GM12878 (cell line): ENCODE measurements at regions of chr1 and their contacts with region 1.

Region 1: GRCh38 chr1:89483010-89483756 is 41.4 kb upstream of the LRRC8B start:
- DNase-seq: peak; percentile 46
- ATAC-seq: peak; percentile 97
- H3K4me3 ChIP-seq: no peak overlapping the region
- H3K27ac ChIP-seq: no peak overlapping the region
- H3K4me1 ChIP-seq: no peaks in the 10 kb centered on the region
- H3K27me3 ChIP-seq: no peaks in the 10 kb centered on the region
- CTCF ChIP-seq: peak; percentile 72 to 82 (median 78)
- EP300 ChIP-seq: no peak
- POLR2A ChIP-seq: no peak
- RAD21 ChIP-seq: peak; percentile 77

Region 2: GRCh38 chr1:89472952-89473351 is 10.2 kb before region 1 on chr1:
- CTCF ChIA-PET with region 1: interaction called, 20 read pairs
- POLR2A ChIA-PET with region 1: no interaction called
- RAD21 ChIA-PET with region 1: interaction called, 3 read pairs
- SMC1A ChIA-PET with region 1: no interaction called
- in situ Hi-C with region 1: no loop called
- intact Hi-C with region 1: no loop called
- DNase-seq: no peak
- ATAC-seq: no peak
- H3K4me3 ChIP-seq: no peak overlapping the region
- H3K27ac ChIP-seq: no peak overlapping the region
- H3K4me1 ChIP-seq: no peaks in the 10 kb centered on the region
- H3K27me3 ChIP-seq: no peaks in the 10 kb centered on the region
- CTCF ChIP-seq: no peak
- EP300 ChIP-seq: no peak
- POLR2A ChIP-seq: no peak
- RAD21 ChIP-seq: no peak

Region 3: DNA sequence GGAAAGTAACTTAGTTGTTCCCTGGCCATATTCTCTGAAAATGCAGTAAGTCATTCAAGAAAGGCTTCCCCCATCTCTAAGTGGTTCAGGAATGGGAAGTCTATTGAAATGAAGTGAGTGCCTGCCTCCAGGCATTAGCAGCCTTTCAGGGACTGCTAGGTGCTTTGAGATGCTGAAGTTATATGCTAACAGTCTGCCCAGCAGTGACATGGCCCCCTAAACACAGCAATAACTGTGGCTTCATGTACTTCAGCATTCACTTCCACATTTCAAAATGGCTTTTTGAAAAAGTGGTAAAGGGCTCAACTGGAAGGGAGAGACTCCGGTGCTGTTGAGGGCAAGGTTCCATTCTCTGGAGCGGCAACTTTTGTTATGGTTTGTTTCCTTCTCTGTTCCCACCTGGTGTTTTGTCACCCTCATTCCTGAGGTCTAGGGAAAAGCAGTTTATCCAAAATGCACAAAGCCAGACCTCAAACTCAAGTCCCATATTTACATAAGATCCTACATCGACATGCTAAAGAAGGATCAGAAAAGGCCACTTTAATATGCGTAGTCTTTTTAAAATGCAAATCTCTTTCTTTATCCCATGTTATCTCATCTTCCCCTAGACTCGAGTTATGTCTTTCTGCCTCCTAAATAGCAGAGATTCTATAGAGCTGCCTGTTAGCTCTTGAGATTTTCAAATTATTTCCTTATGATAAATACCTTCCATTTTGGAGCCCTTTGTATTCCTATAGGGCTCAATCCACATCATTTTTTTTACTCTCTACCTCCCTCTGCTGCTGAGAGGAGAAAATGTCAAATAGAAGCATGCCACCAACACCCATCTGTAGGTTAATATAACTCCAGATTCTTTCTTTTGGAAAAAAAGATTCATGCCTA is 115.5 kb after region 1 on chr1:
- CTCF ChIA-PET with region 1: interaction called, 77 read pairs
- POLR2A ChIA-PET with region 1: no interaction called
- RAD21 ChIA-PET with region 1: interaction called, 16 read pairs
- SMC1A ChIA-PET with region 1: interaction called, 22 read pairs
- in situ Hi-C with region 1: no loop called
- intact Hi-C with region 1: loop called (anchors 1 kb)
- DNase-seq: no peak
- ATAC-seq: peak; percentile 88
- H3K4me3 ChIP-seq: no peak overlapping the region
- H3K27ac ChIP-seq: no peak overlapping the region
- H3K4me1 ChIP-seq: peaks cover 9% of the 10 kb centered on the region
- H3K27me3 ChIP-seq: no peaks in the 10 kb centered on the region
- CTCF ChIP-seq: peak; percentile 53 to 62 (median 56)
- EP300 ChIP-seq: no peak
- POLR2A ChIP-seq: no peak
- RAD21 ChIP-seq: peak; percentile 67

Region 4: GRCh38 chr1:89605692-89606091 is 122.5 kb after region 1 on chr1:
- CTCF ChIA-PET with region 1: interaction called, 77 read pairs
- POLR2A ChIA-PET with region 1: no interaction called
- RAD21 ChIA-PET with region 1: interaction called, 16 read pairs
- SMC1A ChIA-PET with region 1: interaction called, 22 read pairs
- in situ Hi-C with region 1: no loop called
- intact Hi-C with region 1: no loop called
- DNase-seq: no peak
- ATAC-seq: no peak
- H3K4me3 ChIP-seq: no peak overlapping the region
- H3K27ac ChIP-seq: no peak overlapping the region
- H3K4me1 ChIP-seq: peaks cover 14% of the 10 kb centered on the region
- H3K27me3 ChIP-seq: no peaks in the 10 kb centered on the region; a peak in 1 of 4 replicates
- CTCF ChIP-seq: no peak
- EP300 ChIP-seq: no peak
- POLR2A ChIP-seq: no peak
- RAD21 ChIP-seq: no peak

Region 5: DNA sequence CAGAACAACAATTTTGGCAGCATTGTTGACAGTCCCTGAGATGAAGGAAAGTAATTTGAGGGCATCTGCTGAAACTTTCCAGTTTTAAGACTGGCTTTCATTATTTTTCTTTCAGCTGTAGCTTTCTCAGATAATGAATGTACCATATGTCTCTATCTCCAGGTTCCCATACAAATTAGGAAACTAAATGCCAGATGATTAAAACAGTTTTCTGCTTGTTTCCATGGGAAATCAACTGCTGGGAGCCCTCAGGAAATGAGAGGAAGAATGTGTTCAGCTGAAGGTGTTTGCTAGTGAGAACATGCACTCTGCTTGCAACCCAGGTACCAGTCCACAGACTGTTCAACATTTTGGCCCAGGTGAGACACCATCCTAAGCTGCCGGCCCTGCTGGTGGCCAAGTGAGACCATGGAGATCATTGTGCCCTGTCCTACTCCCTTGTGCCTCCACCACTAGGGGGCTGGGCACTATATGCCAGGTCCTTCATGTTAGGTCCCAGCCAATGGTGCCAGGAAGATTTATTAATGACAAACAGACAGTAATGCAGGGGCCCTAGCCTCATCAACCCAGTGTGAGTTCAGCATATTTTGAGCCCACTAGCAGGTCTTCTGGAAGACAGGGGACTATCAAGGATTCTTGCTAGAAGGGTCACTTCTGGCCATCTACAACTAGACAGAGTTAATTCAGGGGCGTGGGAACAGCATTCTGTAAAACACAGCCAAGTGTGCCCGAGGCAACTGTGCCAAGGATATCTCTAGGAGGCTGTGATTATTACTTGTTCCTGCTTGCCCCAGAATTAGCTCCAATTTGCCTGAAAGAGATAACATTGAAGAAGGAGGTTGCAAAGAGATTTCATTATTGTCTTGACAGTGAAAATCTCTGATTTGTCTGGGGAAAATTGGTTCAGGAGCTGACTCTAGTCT is 132.8 kb after region 1 on chr1:
- CTCF ChIA-PET with region 1: interaction called, 10 read pairs
- POLR2A ChIA-PET with region 1: no interaction called
- RAD21 ChIA-PET with region 1: interaction called, 4 read pairs
- SMC1A ChIA-PET with region 1: interaction called, 5 read pairs
- in situ Hi-C with region 1: no loop called
- intact Hi-C with region 1: no loop called
- DNase-seq: no peak
- ATAC-seq: peak; percentile 37
- H3K4me3 ChIP-seq: no peak overlapping the region
- H3K27ac ChIP-seq: no peak overlapping the region
- H3K4me1 ChIP-seq: peaks cover 14% of the 10 kb centered on the region
- H3K27me3 ChIP-seq: no peaks in the 10 kb centered on the region
- CTCF ChIP-seq: peak; percentile 15 to 52 (median 37); a peak in 4 of 6 replicates
- EP300 ChIP-seq: no peak
- POLR2A ChIP-seq: no peak
- RAD21 ChIP-seq: 0 out of 2 replicates have a peak, but pooled peaks have one; percentile 8

Region 6: GRCh38 chr1:89987170-89987819 is 504.1 kb after region 1 on chr1:
- CTCF ChIA-PET with region 1: interaction called, 3 read pairs
- POLR2A ChIA-PET with region 1: no interaction called
- RAD21 ChIA-PET with region 1: no interaction called
- SMC1A ChIA-PET with region 1: interaction called, 6 read pairs
- in situ Hi-C with region 1: no loop called
- intact Hi-C with region 1: loop called (anchors 5 kb)
- DNase-seq: peak; percentile 45
- ATAC-seq: peak; percentile 94
- H3K4me3 ChIP-seq: no peak overlapping the region
- H3K27ac ChIP-seq: no peak overlapping the region
- H3K4me1 ChIP-seq: no peaks in the 10 kb centered on the region
- H3K27me3 ChIP-seq: no peaks in the 10 kb centered on the region
- CTCF ChIP-seq: peak; percentile 78 to 92 (median 88); a peak in 5 of 6 replicates
- EP300 ChIP-seq: no peak
- POLR2A ChIP-seq: no peak
- RAD21 ChIP-seq: peak; percentile 98